ENCODE measurements at regions of chr5 and their contacts with region 1.

Region 1: GRCh38 chr5:69234457-69235268 is at the start of gene CDK7:
- DNase-seq: peak; percentile 98
- H3K4me3 Mint-ChIP-seq: peak within 1 kb of the TSS; percentile 97
- H3K27ac Mint-ChIP-seq: peak within 1 kb of the TSS; percentile 86
- H3K4me1 Mint-ChIP-seq: peaks cover 28% of the 10 kb centered on the region
- H3K27me3 Mint-ChIP-seq: no peaks in the 10 kb centered on the region
- total RNA-seq, gene CDK7: 45.6 and 54.2 TPM in 2 replicates

Region 2: DNA sequence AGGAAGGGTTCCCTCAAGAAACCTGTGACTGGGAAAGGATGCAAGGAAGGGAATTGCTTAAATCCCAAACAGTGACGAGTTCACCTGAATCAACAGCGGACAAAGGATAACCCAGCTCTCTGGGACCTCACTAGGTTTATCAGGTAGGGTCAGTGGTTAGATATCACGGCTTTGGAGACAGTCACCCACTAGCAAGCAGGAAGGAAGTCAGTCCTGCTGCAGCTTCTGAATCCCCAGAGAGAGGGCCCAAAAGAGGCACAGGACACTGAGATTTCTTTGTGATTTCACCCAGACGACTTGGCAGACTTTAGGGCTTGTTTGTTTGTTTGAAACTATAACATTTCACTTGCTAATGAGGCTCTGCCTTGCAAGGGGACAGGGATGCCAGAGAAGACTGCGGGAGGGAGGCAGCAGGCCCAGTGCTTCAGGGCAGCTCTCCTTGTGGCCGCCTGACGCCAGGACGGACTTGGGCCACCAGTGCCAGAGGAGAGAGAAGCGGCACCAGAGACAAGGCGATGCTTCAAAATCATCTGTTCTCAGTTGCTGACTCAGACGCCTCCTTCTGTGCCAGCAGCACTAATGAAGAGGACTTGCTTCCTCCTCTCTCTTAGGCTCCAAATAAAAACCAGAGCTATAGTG is 416.5 kb before region 1 on chr5:
- intact Hi-C with region 1: no loop called
- DNase-seq: peak; percentile 30
- H3K4me3 Mint-ChIP-seq: no peak overlapping the region
- H3K27ac Mint-ChIP-seq: no peak overlapping the region
- H3K4me1 Mint-ChIP-seq: no peaks in the 10 kb centered on the region
- H3K27me3 Mint-ChIP-seq: peaks cover 12% of the 10 kb centered on the region

Region 3: GRCh38 chr5:69166686-69167492 is 67.8 kb before region 1 on chr5 and contains the start of gene CCNB1:
- intact Hi-C with region 1: loop called (anchors 1 kb)
- DNase-seq: peak; percentile 100
- H3K4me3 Mint-ChIP-seq: peak within 1 kb of the TSS; percentile 98
- H3K27ac Mint-ChIP-seq: peak within 1 kb of the TSS; percentile 95
- H3K4me1 Mint-ChIP-seq: peaks cover 33% of the 10 kb centered on the region
- H3K27me3 Mint-ChIP-seq: peaks cover 2% of the 10 kb centered on the region
- total RNA-seq, gene CCNB1: 117 and 122 TPM in 2 replicates

Region 4: DNA sequence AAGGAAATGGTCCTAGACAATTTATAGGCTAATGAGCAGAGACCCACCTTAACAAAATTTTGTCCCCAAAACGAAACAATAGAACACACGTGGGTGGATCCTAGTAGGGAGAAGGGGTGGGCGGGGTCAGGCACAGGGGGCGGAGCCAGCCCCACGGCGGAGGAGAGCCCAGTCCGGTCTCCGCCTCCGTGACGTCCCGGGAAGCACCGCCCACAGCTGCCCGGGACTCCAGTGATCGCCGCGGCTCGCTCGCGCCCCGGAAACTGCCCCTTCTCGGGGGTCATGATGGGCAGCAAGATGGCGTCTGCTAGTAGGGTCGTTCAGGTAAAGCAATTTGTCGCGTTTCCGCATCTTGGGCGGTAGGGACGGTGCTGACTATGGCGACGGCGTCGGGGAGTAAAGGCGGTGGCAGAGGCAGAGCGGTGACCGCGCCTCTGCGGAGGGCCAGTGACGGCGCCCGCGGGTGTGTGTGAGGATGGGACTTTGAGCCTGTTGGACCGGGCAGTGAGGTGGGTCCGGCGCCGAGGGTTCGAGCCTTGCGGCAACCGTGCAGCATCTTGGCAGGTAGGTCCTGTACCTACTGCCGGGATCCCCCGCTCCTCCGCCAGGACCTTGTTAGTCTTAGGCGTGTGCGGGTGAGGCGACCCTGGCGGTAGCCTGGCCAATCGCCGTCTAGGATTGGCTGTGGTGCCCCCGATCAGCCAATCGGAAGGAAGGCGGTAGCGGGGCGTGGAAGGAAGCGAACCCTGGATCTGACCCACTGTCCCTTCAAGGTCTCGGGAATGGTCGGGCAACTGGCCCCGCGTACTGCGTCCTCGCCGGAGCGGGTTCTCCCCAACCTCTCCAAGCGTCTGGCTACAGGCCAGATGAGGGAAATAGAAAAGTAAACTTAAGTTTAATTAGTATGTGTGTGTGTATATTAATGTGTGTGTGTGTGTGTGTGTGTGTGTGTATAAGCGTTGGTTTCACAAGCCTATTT is 16.8 kb before region 1 on chr5:
- intact Hi-C with region 1: loop called (anchors 1 kb)
- DNase-seq: peak; percentile 98
- H3K4me3 Mint-ChIP-seq: peak overlapping the region; percentile 96
- H3K27ac Mint-ChIP-seq: peak overlapping the region; percentile 98
- H3K4me1 Mint-ChIP-seq: peaks cover 17% of the 10 kb centered on the region
- H3K27me3 Mint-ChIP-seq: no peaks in the 10 kb centered on the region

Region 5: DNA sequence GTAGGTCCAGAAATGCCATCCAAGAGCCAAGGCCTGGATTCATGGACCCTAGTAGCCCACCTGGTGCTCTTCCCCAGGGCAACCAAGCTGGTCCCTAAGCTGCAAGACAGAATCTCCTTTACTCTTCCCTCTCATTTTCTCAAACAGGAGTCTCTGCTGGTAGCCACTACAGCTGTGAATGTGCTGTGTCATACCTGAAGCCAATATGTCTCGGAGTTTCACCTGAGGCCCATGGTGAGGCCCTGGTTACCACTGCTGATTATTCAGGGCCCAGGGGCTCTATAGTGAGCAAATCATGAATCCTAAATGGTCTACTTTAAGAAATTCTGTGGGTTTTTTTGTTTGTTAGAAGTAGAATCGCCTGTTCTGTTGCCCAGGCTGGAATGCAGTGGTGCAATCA is 15.9 kb after region 1 on chr5:
- intact Hi-C with region 1: no loop called
- DNase-seq: no peak
- H3K4me3 Mint-ChIP-seq: no peak overlapping the region
- H3K27ac Mint-ChIP-seq: no peak overlapping the region
- H3K4me1 Mint-ChIP-seq: peaks cover 8% of the 10 kb centered on the region
- H3K27me3 Mint-ChIP-seq: no peaks in the 10 kb centered on the region

Region 6: GRCh38 chr5:69334793-69335268 is 100.2 kb after region 1 on chr5:
- intact Hi-C with region 1: loop called (anchors 2 kb)
- DNase-seq: peak; percentile 93
- H3K4me3 Mint-ChIP-seq: no peak overlapping the region
- H3K27ac Mint-ChIP-seq: peak overlapping the region; percentile 3
- H3K4me1 Mint-ChIP-seq: peaks cover 17% of the 10 kb centered on the region
- H3K27me3 Mint-ChIP-seq: no peaks in the 10 kb centered on the region

Region 7: GRCh38 chr5:69369369-69370121 is 134.9 kb after region 1 on chr5 and contains the starts of genes AK6, RAD17 and TAF9:
- intact Hi-C with region 1: loop called (anchors 1 kb)
- DNase-seq: peak; percentile 97
- H3K4me3 Mint-ChIP-seq: peak within 1 kb of the TSS; percentile 95
- H3K27ac Mint-ChIP-seq: peak within 1 kb of the TSS; percentile 97
- H3K4me1 Mint-ChIP-seq: peaks cover 29% of the 10 kb centered on the region
- H3K27me3 Mint-ChIP-seq: no peaks in the 10 kb centered on the region
- total RNA-seq, gene AK6: 66.7 and 67.0 TPM in 2 replicates
- total RNA-seq, gene RAD17: 22.7 and 26.8 TPM in 2 replicates
- total RNA-seq, gene TAF9: 63.0 and 65.0 TPM in 2 replicates